ENCODE measurements at regions of chr7 and their contacts with region 1.

Region 1: DNA sequence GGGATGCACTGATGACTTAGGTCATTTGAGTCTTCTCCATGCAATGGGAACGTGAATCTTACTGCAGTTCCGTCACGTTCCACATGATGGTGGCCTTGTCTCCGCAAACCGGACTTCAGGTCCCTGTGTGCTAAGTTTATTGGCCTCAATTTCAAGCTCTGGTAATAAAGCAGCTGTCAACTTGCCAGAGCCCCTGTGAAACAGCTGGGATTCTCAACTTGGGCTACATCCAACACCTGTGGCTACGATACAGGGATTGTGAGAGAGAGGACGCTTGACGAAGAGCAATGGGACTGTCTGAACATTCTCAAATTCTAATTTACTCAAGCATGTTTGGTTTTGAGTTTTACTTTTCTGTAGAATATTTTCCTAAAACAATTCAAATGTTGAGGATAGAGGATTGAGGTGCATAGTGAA is 174.2 kb downstream of the PTN start:
- DNase-seq: peak; percentile 34
- H3K4me3 ChIP-seq: no peak overlapping the region
- H3K27ac ChIP-seq: no peak overlapping the region
- H3K4me1 ChIP-seq: no peaks in the 10 kb centered on the region
- H3K27me3 ChIP-seq: no peaks in the 10 kb centered on the region
- CTCF ChIP-seq: peak; percentile 48 to 68 (median 54)
- EP300 ChIP-seq: no peak
- POLR2A ChIP-seq: no peak

Region 2: GRCh38 chr7:136900005-136900404 is 269.3 kb before region 1 on chr7:
- in situ Hi-C with region 1: no loop called
- intact Hi-C with region 1: no loop called
- DNase-seq: no peak
- H3K4me3 ChIP-seq: no peak overlapping the region
- H3K27ac ChIP-seq: no peak overlapping the region
- H3K4me1 ChIP-seq: no peaks in the 10 kb centered on the region
- H3K27me3 ChIP-seq: no peaks in the 10 kb centered on the region
- CTCF ChIP-seq: no peak
- EP300 ChIP-seq: no peak
- POLR2A ChIP-seq: no peak

Region 3: GRCh38 chr7:137454246-137454724 is 285.0 kb after region 1 on chr7:
- in situ Hi-C with region 1: loop called in 2 of 4 experiments (anchors 25 kb)
- intact Hi-C with region 1: no loop called
- DNase-seq: no peak
- H3K4me3 ChIP-seq: no peak overlapping the region
- H3K27ac ChIP-seq: peak overlapping the region; percentile 42 to 75 (median 63)
- H3K4me1 ChIP-seq: peaks cover 0 to 10% (median 0%) of the 10 kb centered on the region in 4 donors
- H3K27me3 ChIP-seq: no peaks in the 10 kb centered on the region
- CTCF ChIP-seq: peak; percentile 49 to 65 (median 56)
- EP300 ChIP-seq: no peak
- POLR2A ChIP-seq: no peak

Region 4: GRCh38 chr7:137592232-137592896 is 423.1 kb after region 1 on chr7:
- in situ Hi-C with region 1: loop called in 3 of 4 experiments (anchors 25 kb)
- intact Hi-C with region 1: no loop called
- DNase-seq: peak; percentile 59
- H3K4me3 ChIP-seq: no peak overlapping the region
- H3K27ac ChIP-seq: peak overlapping the region in 3 of 4 donors; percentile 43 to 64 (median 49)
- H3K4me1 ChIP-seq: peaks cover 4 to 15% (median 10%) of the 10 kb centered on the region in 4 donors
- H3K27me3 ChIP-seq: no peaks in the 10 kb centered on the region
- CTCF ChIP-seq: peak; percentile 53 to 73 (median 64)
- EP300 ChIP-seq: no peak
- POLR2A ChIP-seq: no peak